Posterior cingulate gyrus (tissue), 11 donors: ENCODE measurements at regions of chr17 and their contacts with region 1.

Region 1: DNA sequence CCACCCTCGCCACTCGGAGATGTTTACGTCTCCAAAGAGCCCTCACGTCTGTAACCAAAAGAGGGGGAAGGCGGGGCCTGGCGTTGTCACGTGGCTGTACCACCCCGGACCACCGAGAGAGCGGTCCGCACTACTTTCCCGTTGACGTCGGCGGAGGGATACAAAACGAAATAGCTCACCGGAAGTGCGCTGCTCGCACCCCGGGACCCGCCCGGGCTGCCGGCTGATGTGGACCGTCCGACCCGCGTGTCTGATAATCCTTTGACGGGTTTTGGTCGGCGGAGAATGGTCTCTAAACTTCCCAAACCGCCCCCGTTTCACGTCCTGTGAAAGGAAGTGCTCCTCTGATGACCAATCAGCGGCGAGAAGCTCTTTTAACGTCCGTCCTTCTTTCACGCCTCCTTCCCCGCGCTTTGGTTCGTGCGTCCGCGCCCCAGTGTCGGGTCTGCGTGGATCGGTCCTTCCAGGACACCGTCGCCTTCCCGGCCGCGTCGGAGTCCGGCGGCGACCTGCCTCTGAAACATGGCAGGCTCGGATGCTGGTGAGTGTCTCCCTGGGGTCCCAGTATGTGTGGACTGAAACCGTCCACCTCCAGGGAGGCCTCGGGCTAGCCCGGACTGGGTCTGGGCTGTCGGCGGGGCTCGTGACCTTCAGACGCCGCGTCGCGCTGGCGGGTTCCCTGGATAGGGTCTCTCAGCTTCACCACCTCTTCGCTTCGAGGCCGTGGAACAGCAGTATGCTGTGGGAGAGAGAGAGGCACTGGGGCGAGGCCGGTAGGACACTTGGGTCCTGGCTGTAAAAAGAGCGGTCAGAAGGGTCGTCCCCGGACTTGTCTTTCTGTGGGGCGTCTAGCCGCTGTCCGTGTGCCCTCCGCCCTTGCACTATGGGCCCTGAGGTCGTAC is at the start of gene CEP95:
- DNase-seq: peak; percentile 87 to 99 (median 93)

Region 2: DNA sequence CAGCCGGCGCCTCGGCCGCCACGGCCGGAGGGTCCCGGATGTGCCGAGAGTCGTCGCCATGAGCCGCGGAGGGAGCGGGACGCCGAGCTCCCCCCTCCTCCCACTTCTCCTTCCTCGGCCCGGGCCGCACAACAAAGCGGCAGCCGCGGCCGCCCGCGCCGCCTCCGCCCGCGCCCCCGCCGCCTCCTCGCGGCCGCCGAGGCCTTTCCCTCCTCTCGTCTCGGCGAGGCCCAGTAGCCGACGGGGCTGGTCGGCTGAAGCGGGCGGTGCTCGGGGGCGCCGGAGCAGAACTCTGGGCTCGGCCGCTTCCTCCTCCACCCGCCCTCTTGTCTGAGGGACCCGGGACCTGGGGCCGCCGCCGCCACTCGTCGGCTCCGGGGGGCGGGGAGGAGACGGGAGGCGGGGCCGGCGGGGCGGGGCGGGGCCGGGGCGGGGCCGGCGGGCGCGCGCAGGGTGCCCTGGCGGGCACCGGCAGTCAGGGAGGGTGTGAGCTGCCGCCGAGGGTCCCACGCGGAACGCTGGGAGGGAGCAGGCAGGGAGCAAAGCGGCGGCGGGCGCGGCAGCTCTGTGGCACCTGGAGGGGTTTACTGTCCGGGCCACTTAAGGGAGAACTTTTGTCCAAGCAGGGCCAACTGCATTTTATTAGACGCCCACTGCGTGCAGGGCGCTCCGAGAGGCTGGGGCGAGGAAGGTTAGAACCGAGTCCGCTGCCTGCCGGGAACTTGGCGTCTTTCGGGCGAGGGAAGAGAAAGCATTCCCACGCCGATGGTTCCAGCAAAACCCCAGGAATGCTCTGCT is 155.3 kb after region 1 on chr17 and contains the start of gene SMURF2:
- intact Hi-C with region 1: loop called (anchors 5 kb)
- DNase-seq: peak; percentile 43 to 96 (median 72)